AG04450 (cell line): ENCODE measurements at regions of chr1 and their contacts with region 1.

Region 1: GRCh38 chr1:178501705-178502329 is 5.1 kb upstream of the CLEC20A start:
- DNase-seq: peak; percentile 36
- H3K4me3 ChIP-seq: no peak overlapping the region
- H3K27ac ChIP-seq: no peak overlapping the region
- H3K27me3 ChIP-seq: peaks cover 3% of the 10 kb centered on the region
- CTCF ChIP-seq: peak; percentile 97

Region 2: GRCh38 chr1:178300352-178300699 is 201.5 kb before region 1 on chr1:
- CTCF ChIA-PET with region 1: interaction called, 81 read pairs
- POLR2A ChIA-PET with region 1: no interaction called
- DNase-seq: no peak
- H3K4me3 ChIP-seq: no peak overlapping the region
- H3K27ac ChIP-seq: no peak overlapping the region
- H3K27me3 ChIP-seq: no peaks in the 10 kb centered on the region
- CTCF ChIP-seq: no peak

Region 3: GRCh38 chr1:178374016-178374415 is 127.8 kb before region 1 on chr1:
- CTCF ChIA-PET with region 1: interaction called, 11 read pairs
- POLR2A ChIA-PET with region 1: no interaction called
- DNase-seq: no peak
- H3K4me3 ChIP-seq: no peak overlapping the region
- H3K27ac ChIP-seq: no peak overlapping the region
- H3K27me3 ChIP-seq: no peaks in the 10 kb centered on the region
- CTCF ChIP-seq: no peak

Region 4: DNA sequence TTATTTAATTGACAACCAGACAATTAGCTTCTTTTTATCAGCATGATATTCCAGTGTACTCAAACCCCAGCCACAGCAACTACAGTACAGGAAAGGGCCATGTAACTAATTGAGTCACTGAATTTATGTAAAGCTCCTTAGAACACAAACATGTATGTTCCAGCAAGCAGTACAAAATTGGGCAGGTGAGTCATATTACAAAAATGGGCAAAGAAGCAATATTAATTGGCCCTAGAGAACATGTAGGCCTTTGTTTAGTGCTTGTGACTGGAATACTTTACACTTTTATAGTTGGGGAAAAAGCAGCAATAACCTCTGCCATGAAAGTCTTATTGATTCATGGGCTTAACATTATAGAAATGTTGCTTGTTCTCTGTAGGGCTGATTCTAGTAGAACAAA is 36.8 kb before region 1 on chr1:
- CTCF ChIA-PET with region 1: interaction called, 32 read pairs
- POLR2A ChIA-PET with region 1: no interaction called
- DNase-seq: peak; percentile 26
- H3K4me3 ChIP-seq: no peak overlapping the region
- H3K27ac ChIP-seq: no peak overlapping the region
- H3K27me3 ChIP-seq: no peaks in the 10 kb centered on the region
- CTCF ChIP-seq: no peak

Region 5: DNA sequence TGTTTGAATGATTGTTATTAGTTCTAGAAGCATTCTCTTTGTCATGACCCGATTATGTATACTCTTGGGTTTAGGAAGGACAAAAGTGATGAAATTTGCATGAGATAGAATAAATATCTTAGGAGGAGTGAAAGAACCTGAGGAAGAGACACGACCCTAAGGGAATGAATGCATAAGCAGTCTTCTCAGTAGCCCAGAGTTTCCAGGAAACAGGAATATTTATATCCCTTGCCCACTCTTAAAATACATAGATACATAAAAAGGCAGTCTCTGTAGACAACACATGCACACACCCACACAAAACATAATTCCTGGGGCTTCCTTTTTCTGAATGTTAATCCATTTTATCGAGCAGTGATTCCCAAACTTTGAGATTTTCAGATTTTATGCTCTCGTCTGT is 24.4 kb before region 1 on chr1:
- CTCF ChIA-PET with region 1: interaction called, 42 read pairs
- POLR2A ChIA-PET with region 1: no interaction called
- DNase-seq: no peak
- H3K4me3 ChIP-seq: no peak overlapping the region
- H3K27ac ChIP-seq: no peak overlapping the region
- H3K27me3 ChIP-seq: no peaks in the 10 kb centered on the region
- CTCF ChIP-seq: no peak

Region 6: GRCh38 chr1:178513278-178514022 is 11.6 kb after region 1 on chr1:
- CTCF ChIA-PET with region 1: interaction called, 59 read pairs
- POLR2A ChIA-PET with region 1: interaction called, 3 read pairs
- DNase-seq: no peak
- H3K4me3 ChIP-seq: no peak overlapping the region
- H3K27ac ChIP-seq: peak overlapping the region; percentile 21
- H3K27me3 ChIP-seq: no peaks in the 10 kb centered on the region
- CTCF ChIP-seq: peak; percentile 10; the same call in 1 of the 2 replicates

Region 7: GRCh38 chr1:179241523-179242097 is 739.8 kb after region 1 on chr1:
- CTCF ChIA-PET with region 1: interaction called, 10 read pairs
- POLR2A ChIA-PET with region 1: no interaction called
- DNase-seq: no peak
- H3K4me3 ChIP-seq: no peak overlapping the region
- H3K27ac ChIP-seq: no peak overlapping the region
- H3K27me3 ChIP-seq: no peaks in the 10 kb centered on the region
- CTCF ChIP-seq: no peak